Transverse colon (tissue), 4 donors: ENCODE measurements at regions of chr16 and their contacts with region 1.

Region 1: GRCh38 chr16:86432691-86433090 is 77.6 kb upstream of the FOXF1 start:
- DNase-seq: peak; percentile 48
- H3K4me3 ChIP-seq: no peak overlapping the region
- H3K27ac ChIP-seq: peak overlapping the region; percentile 77 to 85 (median 80)
- H3K4me1 ChIP-seq: peaks cover 6 to 41% (median 20%) of the 10 kb centered on the region in 4 donors
- H3K27me3 ChIP-seq: no peaks in the 10 kb centered on the region
- CTCF ChIP-seq: no peak
- EP300 ChIP-seq: peak; percentile 66
- POLR2A ChIP-seq: no peak

Region 2: GRCh38 chr16:86396897-86397296 is 35.8 kb before region 1 on chr16:
- in situ Hi-C with region 1: no loop called
- intact Hi-C with region 1: loop called (anchors 5 kb)
- DNase-seq: peak; percentile 53
- H3K4me3 ChIP-seq: no peak overlapping the region
- H3K27ac ChIP-seq: peak overlapping the region; percentile 77 to 91 (median 82)
- H3K4me1 ChIP-seq: peaks cover 0 to 14% (median 7%) of the 10 kb centered on the region in 4 donors
- H3K27me3 ChIP-seq: no peaks in the 10 kb centered on the region
- CTCF ChIP-seq: no peak
- EP300 ChIP-seq: no peak
- POLR2A ChIP-seq: no peak

Region 3: DNA sequence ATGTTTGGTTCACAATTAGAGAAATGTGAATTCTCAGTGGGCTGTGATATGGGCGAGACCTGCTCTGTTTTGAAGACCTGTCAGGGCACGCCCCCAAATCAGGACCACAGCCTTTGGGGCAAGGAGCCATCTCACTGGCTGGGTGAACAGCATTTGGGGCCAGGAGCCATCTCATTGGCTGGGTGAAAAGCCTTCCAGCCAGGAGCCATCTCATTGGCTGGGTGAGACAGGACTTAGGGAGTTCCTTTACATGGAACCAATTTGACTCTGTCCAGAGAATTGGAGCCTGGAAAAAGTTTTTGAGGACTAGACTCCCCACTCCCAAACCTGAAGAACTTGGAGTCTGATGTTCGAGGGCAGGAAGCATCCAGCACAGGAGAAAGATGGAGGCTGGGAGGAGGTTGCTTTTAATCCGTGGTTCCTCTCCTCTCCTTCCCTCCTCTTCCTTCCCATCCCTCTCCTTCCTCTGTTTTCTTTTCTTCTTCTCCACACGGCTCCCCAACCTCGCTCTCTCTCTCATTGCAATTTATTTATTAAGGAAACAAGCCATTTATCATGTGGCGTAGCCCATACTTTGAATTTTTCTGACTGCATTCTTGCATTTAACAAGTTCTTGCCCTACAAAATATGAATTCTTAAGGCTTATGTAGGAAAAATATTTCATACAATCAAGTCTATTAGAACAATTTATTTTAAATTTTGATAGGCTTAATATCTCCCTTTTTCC is 165.4 kb after region 1 on chr16:
- in situ Hi-C with region 1: no loop called
- intact Hi-C with region 1: no loop called
- DNase-seq: no peak
- H3K4me3 ChIP-seq: no peak overlapping the region
- H3K27ac ChIP-seq: no peak overlapping the region
- H3K4me1 ChIP-seq: no peaks in the 10 kb centered on the region
- H3K27me3 ChIP-seq: peaks cover 81% of the 10 kb centered on the region
- CTCF ChIP-seq: no peak
- EP300 ChIP-seq: no peak
- POLR2A ChIP-seq: no peak